Psoas muscle (tissue), 8 donors: ENCODE measurements at regions of chr12 and their contacts with region 1.

Region 1: DNA sequence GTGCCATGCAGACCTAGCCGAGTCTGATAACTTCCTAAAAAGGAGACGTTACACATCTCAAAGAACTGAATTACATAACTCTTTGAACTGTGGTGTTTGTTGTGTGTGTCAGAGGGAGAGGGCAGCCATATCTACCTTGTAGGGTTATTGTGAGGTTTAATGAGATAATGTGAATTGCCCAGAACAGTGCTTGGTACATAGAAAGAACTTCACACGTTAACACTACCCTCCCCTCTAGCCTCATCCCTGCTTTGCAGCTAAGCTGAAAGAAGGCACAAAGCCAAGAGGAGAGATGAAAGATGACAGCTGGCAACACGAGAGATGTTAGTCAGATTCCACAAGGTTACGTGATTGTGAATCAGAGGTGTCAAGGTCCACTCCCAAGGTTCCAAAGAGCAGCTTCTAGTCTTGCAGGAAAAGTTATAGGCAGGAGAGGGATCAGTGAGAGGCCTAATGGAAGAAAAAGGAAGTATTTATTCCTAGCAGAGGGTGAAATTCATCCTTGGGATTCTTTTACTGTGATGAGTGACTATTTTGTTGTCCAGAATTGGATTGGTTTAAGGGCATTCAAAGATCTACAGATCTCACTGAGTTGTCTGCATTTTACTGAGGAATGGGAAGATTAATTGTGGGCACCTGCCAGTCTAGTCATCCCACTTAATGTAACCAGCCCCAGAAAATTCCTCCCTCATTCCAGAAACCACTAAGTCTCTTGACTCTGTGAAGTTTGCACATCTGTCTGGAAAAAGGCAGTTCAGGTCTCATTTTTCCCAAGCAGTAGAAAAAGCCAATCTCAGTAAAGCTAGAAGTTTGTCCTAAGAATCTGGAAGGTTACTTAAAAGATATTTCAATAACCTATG is 25.9 kb upstream of the WNK1 start:
- DNase-seq: no peak
- ATAC-seq: peak; percentile 76 to 89 (median 88)
- H3K4me3 ChIP-seq: no peak overlapping the region
- H3K27ac ChIP-seq: peak overlapping the region; percentile 60
- H3K4me1 ChIP-seq: no peaks in the 10 kb centered on the region
- H3K27me3 ChIP-seq: no peaks in the 10 kb centered on the region
- CTCF ChIP-seq: no peak

Region 2: GRCh38 chr12:662566-663292 is 63.8 kb before region 1 on chr12:
- intact Hi-C with region 1: loop called in 1 of 2 experiments (anchors 5 kb)
- DNase-seq: no peak
- ATAC-seq: peak; percentile 41 to 73 (median 62)
- H3K4me3 ChIP-seq: peak overlapping the region; percentile 15
- H3K27ac ChIP-seq: peak overlapping the region; percentile 50
- H3K4me1 ChIP-seq: peaks cover 10% of the 10 kb centered on the region
- H3K27me3 ChIP-seq: no peaks in the 10 kb centered on the region
- CTCF ChIP-seq: no peak